Astrocyte of the spinal cord (primary cell): ENCODE measurements at regions of chr4 and their contacts with region 1.

Region 1: GRCh38 chr4:176538217-176538925 is 218.6 kb downstream of the SPCS3 start:
- DNase-seq: peak; percentile 92
- H3K4me3 ChIP-seq: no peak overlapping the region
- CTCF ChIP-seq: no peak

Region 2: GRCh38 chr4:176436293-176436973 is 101.9 kb before region 1 on chr4:
- in situ Hi-C with region 1: loop called (anchors 25 kb)
- DNase-seq: peak; percentile 78
- H3K4me3 ChIP-seq: no peak overlapping the region
- CTCF ChIP-seq: no peak